ENCODE measurements at regions of chr2 and their contacts with region 1.

Region 1: DNA sequence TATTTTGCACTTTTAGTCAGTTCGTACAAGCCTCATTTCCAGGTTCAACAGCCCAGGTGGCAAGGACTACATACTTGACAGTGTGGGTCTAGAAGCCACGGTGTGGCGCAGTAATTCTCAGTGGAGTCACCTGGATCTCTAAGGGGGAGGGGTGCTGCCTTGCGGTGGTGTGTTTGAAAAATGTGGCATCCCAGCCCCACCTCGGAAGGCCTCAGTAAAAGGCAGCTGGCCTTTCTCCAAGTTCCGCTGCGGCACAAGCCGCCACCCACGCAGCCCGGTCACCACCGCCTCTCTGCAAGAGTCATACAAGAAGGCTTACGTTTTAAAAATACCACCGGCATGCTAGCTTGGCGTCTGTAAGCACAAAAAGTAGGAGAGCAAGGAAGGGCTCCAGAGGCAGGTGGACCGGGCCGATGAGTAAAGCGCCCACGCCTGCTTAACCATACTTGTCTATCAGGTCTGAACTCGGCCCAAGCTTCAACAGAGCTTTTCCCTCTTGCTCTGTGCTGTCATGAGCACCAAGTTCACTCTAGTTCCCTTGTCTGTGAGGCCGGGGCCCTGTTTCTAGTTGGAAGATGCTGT is 49.5 kb downstream of the SPRED2 start:
- DNase-seq: peak; percentile 98
- ATAC-seq: peak; percentile 94
- H3K4me3 Mint-ChIP-seq: no peak overlapping the region
- H3K27ac Mint-ChIP-seq: no peak overlapping the region
- H3K4me1 Mint-ChIP-seq: peaks cover 32% of the 10 kb centered on the region
- H3K27me3 Mint-ChIP-seq: peaks cover 10% of the 10 kb centered on the region
- CTCF ChIP-seq: peak; percentile 47

Region 2: GRCh38 chr2:65430603-65431420 is 47.9 kb after region 1 on chr2:
- CTCF ChIA-PET with region 1: interaction called, 4 read pairs
- POLR2A ChIA-PET with region 1: interaction called, 4 read pairs
- intact Hi-C with region 1: loop called (anchors 2 kb)
- DNase-seq: peak; percentile 82
- ATAC-seq: peak; percentile 65
- H3K4me3 Mint-ChIP-seq: peak overlapping the region; percentile 88
- H3K27ac Mint-ChIP-seq: peak overlapping the region; percentile 52
- H3K4me1 Mint-ChIP-seq: peaks cover 3% of the 10 kb centered on the region
- H3K27me3 Mint-ChIP-seq: peaks cover 38% of the 10 kb centered on the region
- CTCF ChIP-seq: no peak